ENCODE measurements at regions of chr1 and their contacts with region 1.

Region 1: DNA sequence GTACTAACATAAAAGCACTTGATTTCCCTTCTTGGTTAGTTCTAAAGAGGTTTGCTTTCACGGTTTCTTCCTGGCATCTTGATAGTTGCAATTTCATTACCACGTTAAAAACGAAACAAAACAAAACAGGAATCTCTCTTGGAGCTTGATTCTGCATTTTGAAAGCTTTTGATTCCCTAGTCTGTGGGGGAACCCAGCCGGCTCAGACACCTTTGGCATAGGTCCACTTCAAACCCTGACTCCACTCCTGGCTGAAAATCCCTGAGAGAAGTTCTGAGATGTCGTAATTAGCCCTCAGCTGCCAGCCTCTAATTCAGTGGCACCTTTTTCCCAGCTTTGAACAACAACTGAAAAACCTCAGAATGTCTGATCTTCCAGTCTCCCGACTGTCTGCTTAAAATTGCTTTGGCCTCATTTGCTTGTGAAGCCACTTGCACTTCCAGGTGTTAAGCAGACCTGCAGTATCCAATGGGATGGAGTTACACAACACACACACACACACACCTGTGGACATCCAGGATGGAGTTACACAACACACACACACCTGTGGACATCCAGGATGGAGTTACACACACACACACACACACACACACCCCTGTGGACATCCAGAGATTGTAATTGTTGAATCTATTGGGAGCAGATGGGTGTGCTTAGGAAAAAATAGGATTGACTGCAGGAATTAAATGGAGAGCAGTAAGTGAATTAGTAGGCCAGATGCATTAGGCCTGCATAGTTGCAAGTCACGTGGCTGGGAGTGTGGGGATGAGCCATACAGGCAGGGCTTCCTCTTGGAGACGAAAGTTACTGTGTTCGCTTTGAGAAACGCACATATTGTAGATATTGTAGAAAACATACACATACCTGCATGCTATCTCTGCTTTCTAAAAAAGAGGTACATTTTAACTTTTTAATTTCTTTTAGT is 285.6 kb upstream of the FMN2 start:
- DNase-seq: no peak
- ATAC-seq: no peak
- H3K4me3 Mint-ChIP-seq: no peak overlapping the region
- H3K27ac Mint-ChIP-seq: no peak overlapping the region
- H3K4me1 Mint-ChIP-seq: peaks cover 20% of the 10 kb centered on the region
- H3K27me3 Mint-ChIP-seq: no peaks in the 10 kb centered on the region

Region 2: GRCh38 chr1:239413916-239414315 is 392.2 kb before region 1 on chr1:
- CTCF ChIA-PET with region 1: no interaction called
- POLR2A ChIA-PET with region 1: no interaction called
- intact Hi-C with region 1: loop called in 1 of 2 experiments (anchors 5 kb)
- DNase-seq: no peak
- ATAC-seq: no peak
- H3K4me3 Mint-ChIP-seq: no peak overlapping the region
- H3K27ac Mint-ChIP-seq: no peak overlapping the region
- H3K4me1 Mint-ChIP-seq: no peaks in the 10 kb centered on the region
- H3K27me3 Mint-ChIP-seq: no peaks in the 10 kb centered on the region

Region 3: DNA sequence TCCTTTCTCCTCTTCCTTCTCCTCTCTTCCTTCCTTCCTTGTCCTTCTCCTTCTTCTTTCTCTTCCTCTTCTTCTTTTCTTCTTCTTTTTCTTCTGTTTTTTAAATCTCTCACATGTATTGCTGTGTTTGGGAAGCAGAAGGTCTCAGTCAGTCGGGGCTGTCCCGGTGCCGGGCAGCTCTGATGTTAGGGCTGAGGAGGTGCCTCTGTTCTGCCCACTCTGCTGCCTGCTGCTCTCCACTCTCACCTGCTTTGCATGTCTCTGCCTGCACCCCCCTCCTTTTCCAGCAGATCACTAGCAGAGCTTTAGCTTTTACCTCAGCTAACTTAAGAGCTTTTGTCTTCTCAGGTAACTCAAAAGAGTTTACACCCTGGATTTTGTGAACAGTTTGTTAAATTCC is 143.2 kb before region 1 on chr1:
- CTCF ChIA-PET with region 1: no interaction called
- POLR2A ChIA-PET with region 1: no interaction called
- intact Hi-C with region 1: loop called in 1 of 2 experiments (anchors 5 kb)
- DNase-seq: peak; percentile 10
- ATAC-seq: no peak
- H3K4me3 Mint-ChIP-seq: no peak overlapping the region
- H3K27ac Mint-ChIP-seq: no peak overlapping the region
- H3K4me1 Mint-ChIP-seq: peaks cover 9% of the 10 kb centered on the region
- H3K27me3 Mint-ChIP-seq: no peaks in the 10 kb centered on the region

Region 4: GRCh38 chr1:239757711-239758110 is 48.4 kb before region 1 on chr1:
- CTCF ChIA-PET with region 1: no interaction called
- POLR2A ChIA-PET with region 1: no interaction called
- intact Hi-C with region 1: loop called in 1 of 2 experiments (anchors 5 kb)
- DNase-seq: no peak
- ATAC-seq: no peak
- H3K4me3 Mint-ChIP-seq: no peak overlapping the region
- H3K27ac Mint-ChIP-seq: no peak overlapping the region
- H3K4me1 Mint-ChIP-seq: no peaks in the 10 kb centered on the region
- H3K27me3 Mint-ChIP-seq: no peaks in the 10 kb centered on the region